Astrocyte of the cerebellum (primary cell): ENCODE measurements at regions of chr12 and their contacts with region 1.

Region 1: GRCh38 chr12:78128211-78128610 is 297.5 kb downstream of the NAV3 start:
- DNase-seq: no peak
- H3K4me3 ChIP-seq: no peak overlapping the region
- CTCF ChIP-seq: no peak

Region 2: GRCh38 chr12:78004249-78005093 is 123.7 kb before region 1 on chr12:
- in situ Hi-C with region 1: loop called (anchors 5 kb)
- DNase-seq: no peak
- H3K4me3 ChIP-seq: no peak overlapping the region
- CTCF ChIP-seq: no peak

Region 3: DNA sequence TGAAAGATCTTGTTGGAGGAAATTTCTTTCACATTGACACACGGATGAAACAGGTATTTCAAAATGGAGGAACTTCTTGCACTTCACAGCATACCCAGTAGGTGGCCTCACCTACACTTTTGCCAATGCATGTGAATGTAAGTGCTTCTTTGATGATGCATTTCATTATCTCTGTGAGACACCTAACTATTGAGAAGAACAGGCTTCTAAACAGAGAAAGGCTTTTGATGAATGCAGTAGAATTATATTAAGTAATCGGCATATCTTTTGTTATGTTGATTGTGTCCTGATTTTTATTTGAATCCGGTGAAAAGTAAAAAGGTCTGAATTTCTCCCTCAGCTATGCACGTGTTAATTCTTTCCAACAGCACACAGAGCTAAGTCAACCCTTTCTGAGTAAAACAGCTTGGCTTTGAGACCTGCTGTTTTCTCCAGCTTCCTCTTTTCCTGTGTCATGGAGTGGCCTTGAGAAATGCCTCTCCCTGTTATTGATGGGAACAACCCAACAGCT is 101.4 kb after region 1 on chr12:
- in situ Hi-C with region 1: no loop called
- DNase-seq: no peak
- H3K4me3 ChIP-seq: no peak overlapping the region
- CTCF ChIP-seq: peak; percentile 66